ENCODE measurements at regions of chr5 and their contacts with region 1.

Region 1: DNA sequence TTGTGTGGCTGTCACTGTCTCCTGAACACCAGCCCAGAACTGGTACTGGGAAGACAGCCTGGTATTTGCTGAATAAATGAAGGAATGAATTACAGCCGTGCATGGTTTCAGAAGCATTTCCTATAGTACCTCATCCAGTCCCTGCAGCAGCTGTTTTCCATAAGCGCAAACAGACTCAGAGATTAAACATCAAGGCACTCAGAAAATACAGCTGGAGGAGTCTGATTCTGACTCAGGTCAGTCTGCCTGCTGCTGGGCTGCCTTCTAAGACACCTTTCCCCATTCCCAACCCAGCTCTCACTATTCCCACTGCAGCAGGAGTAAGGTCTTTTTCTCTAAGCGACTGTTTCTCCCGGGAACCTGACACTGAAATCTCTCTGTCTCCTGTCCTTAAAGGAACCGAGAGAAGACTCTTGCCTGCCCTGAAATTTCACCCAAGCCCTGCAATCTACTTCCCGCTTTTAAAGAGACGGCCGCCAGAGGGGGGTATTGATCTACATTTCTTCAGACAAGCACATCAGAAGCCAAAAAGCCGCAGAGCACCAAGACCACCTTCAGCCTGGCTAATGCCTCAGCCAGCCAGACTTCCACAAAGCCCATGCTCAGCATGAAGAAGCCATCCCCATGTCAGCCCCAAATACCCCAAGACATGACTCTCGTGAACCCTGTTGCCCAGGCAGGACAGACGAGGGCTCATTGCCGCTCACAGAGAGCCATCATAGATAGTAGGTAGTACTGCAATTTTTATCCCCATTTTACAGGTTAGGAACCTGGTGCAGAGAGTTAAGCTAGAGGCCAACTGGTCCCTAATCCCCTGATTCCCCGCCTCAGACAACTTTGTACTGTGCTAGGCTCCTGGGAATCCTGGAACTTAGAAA is 5.4 kb upstream of the FOXI1 start:
- DNase-seq: peak; percentile 80
- H3K4me3 ChIP-seq: no peak overlapping the region
- H3K27ac ChIP-seq: no peak overlapping the region
- H3K4me1 ChIP-seq: peaks cover 19% of the 10 kb centered on the region
- H3K27me3 ChIP-seq: no peaks in the 10 kb centered on the region
- CTCF ChIP-seq: peak; percentile 63 to 71
- POLR2A ChIP-seq: no peak

Region 2: DNA sequence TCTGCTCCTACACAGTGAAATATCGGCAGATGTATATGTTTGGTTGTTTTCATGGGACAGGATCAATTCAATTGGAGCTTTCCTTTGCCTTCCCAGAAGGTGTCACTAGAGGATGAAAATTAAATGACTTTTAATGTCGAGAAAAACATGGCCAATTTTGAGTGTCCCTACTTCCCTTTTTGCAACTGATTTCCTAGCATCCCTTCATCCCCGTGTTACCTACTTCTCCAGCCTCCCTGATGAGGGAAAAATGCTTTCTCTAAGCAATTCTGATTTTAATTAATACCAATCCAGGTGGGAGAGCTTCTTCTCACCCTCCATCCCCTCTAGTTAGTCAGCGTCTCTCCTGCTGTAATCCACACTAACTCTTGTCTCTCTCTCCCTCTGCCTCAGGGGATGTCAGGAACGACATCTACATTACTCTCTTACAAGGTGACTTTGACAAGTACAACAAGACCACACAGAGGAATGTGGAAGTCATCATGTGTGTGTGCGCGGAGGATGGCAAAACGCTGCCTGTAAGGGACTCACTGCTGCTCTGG is 398.3 kb before region 1 on chr5:
- CTCF ChIA-PET with region 1: interaction called, 9 read pairs
- POLR2A ChIA-PET with region 1: no interaction called
- dilution Hi-C with region 1: no loop called
- intact Hi-C with region 1: loop called (anchors 1 kb)
- DNase-seq: peak; percentile 45
- H3K4me3 ChIP-seq: no peak overlapping the region
- H3K27ac ChIP-seq: no peak overlapping the region
- H3K4me1 ChIP-seq: peaks cover 28% of the 10 kb centered on the region
- H3K27me3 ChIP-seq: no peaks in the 10 kb centered on the region
- CTCF ChIP-seq: peak; percentile 25 to 42
- POLR2A ChIP-seq: no peak

Region 3: DNA sequence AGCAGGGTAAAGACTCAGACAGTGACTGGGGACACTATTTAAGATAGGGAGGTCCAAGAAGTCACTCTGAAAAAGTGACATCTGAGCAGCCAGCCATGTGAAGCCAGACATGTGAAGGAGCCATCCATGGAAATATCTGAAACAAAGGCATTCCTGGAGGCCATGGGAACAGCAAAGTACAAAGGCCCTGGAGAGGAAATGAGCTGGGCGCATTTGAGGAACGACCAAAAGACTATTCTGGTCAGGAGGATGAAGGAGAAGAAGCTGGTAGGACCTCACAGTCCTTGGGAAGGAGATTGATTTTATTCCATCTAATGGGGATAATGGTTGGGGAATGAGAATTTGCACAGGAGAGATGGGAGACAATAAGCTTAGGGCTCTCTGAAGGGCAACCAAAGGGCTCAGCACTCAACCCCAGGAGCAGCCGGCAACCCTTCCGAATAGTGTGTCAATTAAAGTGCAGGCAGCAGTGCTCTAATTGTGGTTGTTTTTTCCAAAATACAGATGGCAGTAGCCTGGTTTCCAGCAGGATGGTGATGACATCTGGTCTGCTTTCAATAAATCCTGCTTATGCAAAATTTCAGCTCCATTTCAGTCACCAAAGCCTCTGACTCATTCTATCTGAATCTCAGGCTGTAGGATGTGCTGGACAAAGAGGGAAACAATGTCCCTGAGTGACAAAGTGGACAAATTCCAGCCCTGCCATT is 32.1 kb after region 1 on chr5:
- CTCF ChIA-PET with region 1: interaction called, 6 read pairs
- POLR2A ChIA-PET with region 1: no interaction called
- dilution Hi-C with region 1: no loop called
- intact Hi-C with region 1: loop called (anchors 1 kb)
- DNase-seq: peak; percentile 71
- H3K4me3 ChIP-seq: no peak overlapping the region
- H3K27ac ChIP-seq: peak overlapping the region; percentile 42
- H3K4me1 ChIP-seq: peaks cover 47% of the 10 kb centered on the region
- H3K27me3 ChIP-seq: no peaks in the 10 kb centered on the region
- CTCF ChIP-seq: no peak
- POLR2A ChIP-seq: no peak

Region 4: DNA sequence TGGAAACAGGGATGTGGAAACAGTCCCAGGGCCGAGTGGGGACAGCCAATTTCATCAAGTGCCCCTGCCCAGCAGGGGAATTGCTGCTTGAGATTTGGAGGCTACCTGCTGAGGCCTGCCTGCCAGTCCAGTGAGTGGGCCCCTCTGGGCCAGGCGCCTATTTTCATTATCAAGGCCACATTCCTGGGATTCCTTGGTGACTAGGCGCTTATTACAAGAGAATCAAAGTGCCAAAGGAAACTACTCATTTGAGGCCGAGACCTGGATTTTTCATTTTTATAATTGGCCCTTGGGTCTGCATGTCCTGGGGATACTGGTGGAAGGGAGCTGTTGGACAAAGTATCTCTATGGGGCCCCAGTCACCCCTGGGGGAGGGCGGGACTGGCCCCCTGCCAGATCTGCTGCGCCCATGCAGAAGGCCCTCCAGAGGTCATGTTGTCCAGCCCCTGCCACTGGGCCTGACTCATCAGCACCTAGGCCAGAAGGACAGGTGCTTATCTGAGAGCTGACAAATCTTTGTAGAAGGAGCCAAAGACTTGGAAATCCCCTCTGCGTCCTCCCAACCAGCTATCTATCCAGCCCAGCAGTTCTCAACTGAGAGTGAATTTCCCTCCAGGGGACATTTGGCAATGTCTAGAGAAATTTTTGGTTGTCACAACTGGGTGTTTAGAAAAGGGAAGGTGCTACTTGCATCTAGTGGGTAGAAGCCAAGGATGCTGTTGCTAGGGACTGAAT is 51.0 kb after region 1 on chr5:
- CTCF ChIA-PET with region 1: interaction called, 4 read pairs
- POLR2A ChIA-PET with region 1: no interaction called
- dilution Hi-C with region 1: no loop called
- intact Hi-C with region 1: loop called (anchors 1 kb)
- DNase-seq: peak; percentile 88
- H3K4me3 ChIP-seq: no peak overlapping the region
- H3K27ac ChIP-seq: peak overlapping the region; percentile 87
- H3K4me1 ChIP-seq: peaks cover 17% of the 10 kb centered on the region
- H3K27me3 ChIP-seq: no peaks in the 10 kb centered on the region
- CTCF ChIP-seq: no peak
- POLR2A ChIP-seq: no peak

Region 5: DNA sequence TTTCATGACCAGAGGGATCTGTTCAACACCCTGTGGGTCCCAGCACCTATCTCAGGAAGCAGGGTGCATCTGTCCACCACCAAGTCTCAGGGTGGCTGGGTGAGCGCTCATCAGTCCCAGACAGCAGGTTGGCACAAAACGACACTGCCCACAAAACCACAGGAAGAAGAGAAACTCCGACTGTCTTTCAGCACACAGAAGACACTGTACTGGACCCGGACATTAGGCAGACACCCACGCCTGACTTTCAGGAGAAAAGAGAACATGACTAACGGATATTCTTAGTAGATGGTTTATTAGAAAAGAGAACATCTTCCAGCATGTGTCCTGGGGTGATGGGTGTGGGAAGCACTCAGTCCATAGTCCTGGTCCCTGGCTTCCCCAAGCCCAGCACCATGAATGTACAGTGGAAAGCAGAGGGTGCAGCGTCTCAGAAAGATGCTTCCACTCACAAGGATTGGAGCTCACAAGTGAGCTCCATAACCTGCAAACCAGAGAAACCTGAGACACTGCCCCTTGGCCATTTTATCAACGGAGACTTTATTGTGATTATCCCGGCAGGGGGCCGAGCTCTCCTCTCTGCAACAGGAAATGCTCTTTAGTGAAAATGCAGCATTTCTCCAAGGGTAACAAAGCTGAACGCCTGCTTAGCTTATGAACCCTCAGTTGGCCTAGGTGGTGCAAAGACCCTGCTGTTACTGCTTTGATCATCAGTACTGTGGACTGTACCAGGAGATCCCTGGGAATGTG is 233.0 kb after region 1 on chr5:
- CTCF ChIA-PET with region 1: no interaction called
- POLR2A ChIA-PET with region 1: no interaction called
- dilution Hi-C with region 1: no loop called
- intact Hi-C with region 1: loop called (anchors 5 kb)
- DNase-seq: no peak
- H3K4me3 ChIP-seq: no peak overlapping the region
- H3K27ac ChIP-seq: no peak overlapping the region
- H3K4me1 ChIP-seq: peaks cover 14% of the 10 kb centered on the region
- H3K27me3 ChIP-seq: peaks cover 0 to 2% of the 10 kb centered on the region in 2 experiments
- CTCF ChIP-seq: no peak
- POLR2A ChIP-seq: no peak

Region 6: GRCh38 chr5:170420780-170421412 is 320.6 kb after region 1 on chr5:
- CTCF ChIA-PET with region 1: no interaction called
- POLR2A ChIA-PET with region 1: no interaction called
- dilution Hi-C with region 1: no loop called
- intact Hi-C with region 1: loop called (anchors 1 kb)
- DNase-seq: peak; percentile 68
- H3K4me3 ChIP-seq: no peak overlapping the region
- H3K27ac ChIP-seq: no peak overlapping the region
- H3K4me1 ChIP-seq: no peaks in the 10 kb centered on the region
- H3K27me3 ChIP-seq: peaks cover 3 to 5% of the 10 kb centered on the region in 2 experiments
- CTCF ChIP-seq: peak; percentile 69 to 70
- POLR2A ChIP-seq: no peak